Transverse colon (tissue), 4 donors: ENCODE measurements at regions of chr5 and their contacts with region 1.

Region 1: DNA sequence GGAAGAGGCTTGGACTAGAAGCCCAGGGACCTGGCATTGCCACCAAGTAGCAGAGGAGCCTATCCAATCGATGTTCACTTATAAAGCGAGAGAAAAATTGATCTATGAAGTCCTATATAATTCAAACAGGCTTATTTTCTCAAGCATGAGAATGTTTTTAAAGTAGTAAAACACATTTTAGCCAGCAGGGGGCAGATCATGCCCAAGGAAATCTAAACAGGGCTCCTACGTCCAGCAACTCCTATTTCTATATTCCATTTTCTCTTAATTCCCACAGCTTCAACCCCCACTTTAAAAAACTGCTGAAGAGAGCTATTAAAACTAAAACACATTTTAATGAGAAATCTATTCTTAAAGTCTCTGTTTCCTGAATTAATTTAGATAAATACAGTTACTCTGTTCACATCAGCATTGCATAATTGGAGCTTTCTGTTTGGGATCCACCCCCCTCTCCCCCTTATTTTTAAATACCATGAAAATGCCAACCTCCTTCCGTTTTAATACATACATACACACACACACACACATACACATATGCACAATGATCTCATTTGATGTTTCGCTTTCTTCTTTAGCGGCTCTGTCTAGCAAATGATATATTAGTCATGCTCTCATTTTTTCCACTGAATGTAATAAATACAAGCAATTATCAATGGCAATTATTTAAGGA is 144.9 kb downstream of the MYO10 start:
- DNase-seq: no peak
- H3K4me3 ChIP-seq: no peak overlapping the region
- H3K27ac ChIP-seq: no peak overlapping the region
- H3K4me1 ChIP-seq: peaks cover 0 to 4% (median 0%) of the 10 kb centered on the region in 4 donors
- H3K27me3 ChIP-seq: no peaks in the 10 kb centered on the region
- CTCF ChIP-seq: peak; percentile 69 to 77 (median 74)
- EP300 ChIP-seq: no peak
- POLR2A ChIP-seq: no peak

Region 2: DNA sequence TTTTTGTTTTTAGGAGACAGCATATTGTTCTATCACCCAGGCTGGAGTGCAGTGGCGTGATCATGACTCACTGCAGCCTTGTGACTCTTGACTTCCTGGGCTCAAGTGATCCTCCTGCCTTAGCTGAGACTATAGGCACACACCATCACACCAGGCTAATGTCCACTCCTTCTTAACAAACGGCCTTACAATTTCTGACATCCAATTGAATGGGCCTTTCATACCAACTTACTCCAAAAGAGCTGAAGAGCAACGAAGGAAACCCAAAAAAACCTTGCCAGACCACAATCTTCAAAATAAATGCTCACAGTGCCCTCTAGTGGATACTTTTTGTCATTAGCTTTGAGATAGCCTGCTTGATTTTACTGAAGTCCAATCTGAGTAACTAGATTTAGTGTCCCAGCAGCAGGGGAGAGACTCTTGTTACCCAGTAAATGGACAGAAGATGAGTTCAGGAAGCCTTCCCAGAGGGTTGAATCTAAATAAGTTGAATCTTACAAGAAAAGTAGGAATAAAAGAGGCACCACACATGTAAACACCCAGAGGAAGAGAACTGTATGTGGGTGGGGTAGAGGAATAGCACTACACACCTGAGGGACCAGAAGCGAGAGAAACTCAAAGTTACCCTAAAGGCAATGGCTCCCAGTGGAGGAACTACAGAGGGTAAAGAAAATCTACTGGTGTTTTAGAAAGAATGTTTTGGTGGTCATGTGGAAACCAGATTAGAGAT is 334.9 kb before region 1 on chr5:
- in situ Hi-C with region 1: no loop called
- intact Hi-C with region 1: no loop called
- DNase-seq: peak; percentile 20
- H3K4me3 ChIP-seq: no peak overlapping the region
- H3K27ac ChIP-seq: peak overlapping the region in 1 of 4 donors; percentile 2
- H3K4me1 ChIP-seq: peaks cover 8 to 54% (median 14%) of the 10 kb centered on the region in 4 donors
- H3K27me3 ChIP-seq: no peaks in the 10 kb centered on the region
- CTCF ChIP-seq: peak; percentile 63 to 75 (median 70)
- EP300 ChIP-seq: no peak
- POLR2A ChIP-seq: no peak

Region 3: GRCh38 chr5:17204133-17204489 is 412.9 kb after region 1 on chr5:
- in situ Hi-C with region 1: loop called in 2 of 4 experiments (anchors 10 kb)
- intact Hi-C with region 1: no loop called
- DNase-seq: no peak
- H3K4me3 ChIP-seq: no peak overlapping the region
- H3K27ac ChIP-seq: no peak overlapping the region
- H3K4me1 ChIP-seq: no peaks in the 10 kb centered on the region
- H3K27me3 ChIP-seq: peaks cover 29% of the 10 kb centered on the region
- CTCF ChIP-seq: no peak
- EP300 ChIP-seq: no peak
- POLR2A ChIP-seq: no peak

Region 4: DNA sequence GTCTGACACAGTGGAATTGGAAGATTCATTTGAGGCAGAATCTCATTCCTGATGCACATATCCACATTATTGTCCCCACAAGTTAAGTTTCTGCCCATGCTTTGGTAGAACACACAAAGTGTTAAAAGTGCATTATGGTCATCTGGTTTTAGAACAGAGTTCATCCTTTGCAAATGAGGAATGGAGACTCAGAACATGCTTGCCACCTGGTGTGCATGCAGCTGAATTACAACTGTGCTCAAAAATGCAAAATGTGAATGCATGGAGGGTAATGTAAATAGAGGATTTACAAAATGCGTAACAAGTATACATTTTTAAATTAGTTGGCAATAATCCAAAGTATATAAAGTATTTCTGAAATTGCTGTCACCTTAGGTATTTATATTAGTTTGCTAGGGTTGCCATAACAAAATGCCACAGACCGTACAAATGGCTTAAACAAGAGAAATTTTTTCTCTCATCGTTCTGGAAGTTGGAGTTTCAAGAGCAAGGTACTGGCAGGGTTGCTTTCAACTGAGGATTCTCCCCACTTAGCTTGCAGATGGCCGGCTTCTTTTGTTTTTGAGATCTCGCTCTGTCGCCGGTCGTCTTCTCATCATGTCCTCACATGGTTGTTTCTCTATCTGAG is 1514.2 kb after region 1 on chr5:
- in situ Hi-C with region 1: loop called in 1 of 4 experiments (anchors 25 kb)
- intact Hi-C with region 1: no loop called
- DNase-seq: no peak
- H3K4me3 ChIP-seq: no peak overlapping the region
- H3K27ac ChIP-seq: no peak overlapping the region
- H3K4me1 ChIP-seq: no peaks in the 10 kb centered on the region
- H3K27me3 ChIP-seq: no peaks in the 10 kb centered on the region
- CTCF ChIP-seq: peak; percentile 41 to 59 (median 59)
- EP300 ChIP-seq: no peak
- POLR2A ChIP-seq: no peak